MCF 10A (cell line): ENCODE measurements at regions of chr17 and their contacts with region 1.

Region 1: DNA sequence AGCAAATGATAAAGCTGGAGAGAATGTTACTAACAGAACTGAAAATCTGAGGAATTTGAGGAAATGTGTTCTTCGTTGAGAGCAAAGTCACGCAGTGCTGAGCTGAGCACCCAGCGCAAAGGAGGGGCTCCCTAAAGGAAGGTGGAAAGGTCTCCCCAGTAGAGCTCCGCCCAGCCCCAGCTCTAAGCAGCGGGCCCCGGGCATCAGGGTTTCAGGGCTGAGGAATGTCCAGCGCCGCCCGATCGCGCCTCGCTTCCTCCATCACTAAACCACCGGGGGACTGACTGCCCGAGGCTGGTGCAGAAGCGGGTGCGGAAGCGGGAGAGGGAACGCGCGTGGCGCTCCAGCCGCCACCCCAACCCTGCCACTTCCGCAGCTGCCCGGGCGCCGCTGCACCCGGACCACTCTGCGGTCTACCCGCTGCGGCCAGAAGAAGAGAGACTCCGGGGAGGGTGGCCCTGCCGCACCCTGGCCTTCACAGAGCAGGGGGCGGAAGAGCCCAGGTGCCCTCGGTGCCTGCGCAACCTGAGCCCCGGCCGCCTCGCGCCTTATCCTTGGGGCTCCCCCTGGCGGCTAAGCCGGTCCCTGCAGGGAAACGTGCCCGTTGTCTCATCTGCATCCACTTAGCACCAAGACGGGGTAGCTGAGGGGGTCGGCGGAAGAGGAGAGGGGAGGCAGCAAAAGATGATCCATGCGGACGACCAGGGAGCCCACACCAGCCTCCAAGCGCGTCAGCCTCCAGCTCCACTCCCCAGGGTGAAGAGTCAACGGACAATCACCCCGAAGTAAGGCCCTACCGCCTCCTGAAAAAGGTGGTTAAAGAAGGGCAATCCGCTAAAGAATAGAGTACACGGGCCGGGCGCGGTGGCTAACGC is 12.4 kb upstream of the GUCY2D start:
- DNase-seq: peak; percentile 80
- H3K4me3 Mint-ChIP-seq: peak overlapping the region; percentile 63
- H3K27ac Mint-ChIP-seq: no peak overlapping the region
- H3K4me1 Mint-ChIP-seq: peaks cover 13% of the 10 kb centered on the region
- H3K27me3 Mint-ChIP-seq: no peaks in the 10 kb centered on the region
- CTCF ChIP-seq: peak; percentile 91

Region 2: GRCh38 chr17:7818746-7819645 is 171.0 kb before region 1 on chr17:
- CTCF ChIA-PET with region 1: interaction called, 11 read pairs
- POLR2A ChIA-PET with region 1: interaction called, 3 read pairs
- intact Hi-C with region 1: loop called (anchors 2 kb)
- DNase-seq: no peak
- H3K4me3 Mint-ChIP-seq: no peak overlapping the region
- H3K27ac Mint-ChIP-seq: no peak overlapping the region
- H3K4me1 Mint-ChIP-seq: peaks cover 5% of the 10 kb centered on the region
- H3K27me3 Mint-ChIP-seq: no peaks in the 10 kb centered on the region
- CTCF ChIP-seq: no peak

Region 3: DNA sequence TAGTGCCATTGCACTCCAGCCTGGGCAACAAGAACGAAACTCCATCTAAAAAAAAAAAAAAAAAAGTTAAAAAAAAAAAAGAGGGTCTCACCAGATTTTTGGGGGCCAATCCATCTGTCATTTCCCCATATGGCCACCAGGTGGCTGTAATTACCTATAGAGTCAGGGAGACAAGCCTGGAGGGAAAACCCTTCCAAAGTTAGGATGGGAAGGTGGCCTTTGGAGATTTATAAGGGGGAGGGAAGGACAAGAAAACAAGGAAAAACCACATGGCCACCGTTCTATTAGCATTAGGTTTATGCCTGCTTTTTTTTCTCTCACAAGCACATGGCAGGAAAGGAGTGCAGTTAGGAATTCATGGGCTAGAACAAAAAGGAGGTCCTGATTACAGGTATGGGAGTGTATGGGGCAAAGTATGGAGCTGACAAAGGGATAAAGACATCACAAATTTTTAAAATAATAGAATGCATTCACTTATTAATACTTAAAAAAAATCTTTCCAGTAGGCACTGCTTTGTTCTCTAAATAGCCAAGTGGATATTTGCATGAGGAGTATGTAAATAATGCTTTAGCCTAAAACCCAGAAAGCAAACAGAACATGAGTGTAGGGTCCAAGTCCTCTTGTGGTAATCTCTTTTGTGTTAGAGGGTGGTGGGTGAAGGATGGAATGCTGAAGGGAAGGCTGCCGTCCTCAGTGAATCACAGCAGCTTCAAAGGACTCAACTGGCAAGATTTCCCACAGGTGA is 127.2 kb before region 1 on chr17:
- CTCF ChIA-PET with region 1: interaction called, 70 read pairs
- POLR2A ChIA-PET with region 1: interaction called, 19 read pairs
- intact Hi-C with region 1: loop called (anchors 1 kb)
- DNase-seq: peak; percentile 62
- H3K4me3 Mint-ChIP-seq: no peak overlapping the region
- H3K27ac Mint-ChIP-seq: no peak overlapping the region
- H3K4me1 Mint-ChIP-seq: peaks cover 11% of the 10 kb centered on the region
- H3K27me3 Mint-ChIP-seq: no peaks in the 10 kb centered on the region
- CTCF ChIP-seq: peak; percentile 75

Region 4: DNA sequence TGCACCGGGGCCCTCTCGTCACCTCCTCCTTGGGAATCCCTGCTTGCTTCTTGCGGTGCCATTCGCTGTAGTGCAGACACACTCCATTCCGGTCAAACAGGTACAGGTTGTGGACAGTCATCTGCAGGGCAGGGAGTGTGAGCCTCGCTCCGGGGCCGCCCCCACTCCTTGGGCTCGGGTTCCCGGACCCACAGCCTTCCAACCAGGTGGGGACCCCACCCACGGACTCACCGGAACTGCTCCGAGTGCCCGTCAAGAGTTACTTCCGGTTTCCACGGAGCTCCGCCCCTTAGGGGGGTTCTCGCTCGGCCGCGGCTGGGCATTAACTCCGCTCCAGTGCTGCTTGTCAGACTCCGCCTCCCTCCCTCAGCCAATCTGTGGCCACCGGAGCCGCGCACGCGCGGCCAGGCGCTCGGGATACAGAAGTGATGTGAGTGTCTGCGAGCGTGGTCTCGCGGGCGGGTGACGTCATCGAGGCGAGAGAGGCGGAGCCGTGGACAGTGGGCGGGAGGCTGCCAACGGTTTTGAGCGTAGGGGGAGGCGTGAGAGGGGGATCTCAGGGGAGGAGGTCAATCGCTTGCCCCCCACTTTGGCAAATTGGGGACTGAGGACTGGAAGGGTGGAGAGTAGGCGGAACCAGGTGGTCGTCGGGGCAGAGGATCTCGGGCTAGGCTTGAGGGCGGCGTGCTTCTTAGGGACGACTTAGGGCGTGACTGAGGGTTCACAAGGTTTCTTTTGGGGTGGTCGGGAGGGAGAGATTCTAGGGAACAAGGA is 58.1 kb before region 1 on chr17 and contains the starts of genes CNTROB and TRAPPC1:
- CTCF ChIA-PET with region 1: interaction called, 19 read pairs
- POLR2A ChIA-PET with region 1: interaction called, 27 read pairs
- intact Hi-C with region 1: no loop called
- DNase-seq: peak; percentile 98
- H3K4me3 Mint-ChIP-seq: peak within 1 kb of the TSS; percentile 95
- H3K27ac Mint-ChIP-seq: peak within 1 kb of the TSS; percentile 96
- H3K4me1 Mint-ChIP-seq: peaks cover 22% of the 10 kb centered on the region
- H3K27me3 Mint-ChIP-seq: no peaks in the 10 kb centered on the region
- CTCF ChIP-seq: no peak
- total RNA-seq, gene CNTROB: 31.5 and 39.2 TPM in 2 replicates
- total RNA-seq, gene TRAPPC1: 80.0 and 104 TPM in 2 replicates

Region 5: DNA sequence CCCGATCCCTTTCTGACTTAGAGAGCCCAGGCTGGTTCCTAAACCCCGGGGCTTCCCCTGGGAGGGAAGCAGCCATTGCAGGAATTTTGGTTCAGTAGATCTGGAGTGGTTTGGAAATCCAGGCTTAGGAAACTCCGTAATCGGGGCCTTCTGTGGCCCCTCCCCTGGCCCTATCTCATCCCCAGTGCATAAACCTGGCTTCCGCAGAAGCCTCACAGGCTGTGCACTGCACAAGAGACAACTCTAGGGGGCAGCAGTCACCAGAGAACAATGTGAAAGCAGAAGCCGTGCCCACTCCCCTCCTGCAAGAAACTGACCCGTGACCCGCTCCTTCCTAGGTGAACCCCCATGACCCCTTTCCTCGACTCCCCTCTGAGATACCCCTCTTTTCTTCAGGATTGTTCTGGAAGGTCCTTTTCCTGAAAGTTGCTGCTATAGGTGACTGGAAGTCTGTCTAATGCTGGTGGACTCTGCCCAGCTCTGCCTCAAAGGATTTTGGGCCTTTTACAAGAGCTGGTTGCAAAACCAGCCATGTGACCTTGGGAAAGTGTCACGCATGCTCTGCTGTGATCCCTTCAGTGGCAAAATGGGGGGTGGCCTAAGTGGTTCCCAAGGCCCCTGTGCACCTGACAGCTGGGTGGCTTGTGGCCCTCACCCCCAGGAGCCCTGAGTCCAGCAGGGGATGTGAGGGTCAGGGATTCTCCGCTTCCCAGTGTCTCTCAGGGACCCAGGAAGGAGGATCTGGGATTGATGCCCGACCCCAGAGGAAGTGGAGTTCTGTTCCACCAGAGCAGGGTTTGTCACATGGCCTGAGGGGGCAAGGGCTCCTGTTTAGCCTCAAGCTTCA is 26.8 kb after region 1 on chr17:
- CTCF ChIA-PET with region 1: interaction called, 14 read pairs
- POLR2A ChIA-PET with region 1: interaction called, 5 read pairs
- intact Hi-C with region 1: no loop called
- DNase-seq: peak; percentile 87
- H3K4me3 Mint-ChIP-seq: peak overlapping the region; percentile 51
- H3K27ac Mint-ChIP-seq: peak overlapping the region; percentile 95
- H3K4me1 Mint-ChIP-seq: peaks cover 44% of the 10 kb centered on the region
- H3K27me3 Mint-ChIP-seq: no peaks in the 10 kb centered on the region
- CTCF ChIP-seq: peak; percentile 90

Region 6: DNA sequence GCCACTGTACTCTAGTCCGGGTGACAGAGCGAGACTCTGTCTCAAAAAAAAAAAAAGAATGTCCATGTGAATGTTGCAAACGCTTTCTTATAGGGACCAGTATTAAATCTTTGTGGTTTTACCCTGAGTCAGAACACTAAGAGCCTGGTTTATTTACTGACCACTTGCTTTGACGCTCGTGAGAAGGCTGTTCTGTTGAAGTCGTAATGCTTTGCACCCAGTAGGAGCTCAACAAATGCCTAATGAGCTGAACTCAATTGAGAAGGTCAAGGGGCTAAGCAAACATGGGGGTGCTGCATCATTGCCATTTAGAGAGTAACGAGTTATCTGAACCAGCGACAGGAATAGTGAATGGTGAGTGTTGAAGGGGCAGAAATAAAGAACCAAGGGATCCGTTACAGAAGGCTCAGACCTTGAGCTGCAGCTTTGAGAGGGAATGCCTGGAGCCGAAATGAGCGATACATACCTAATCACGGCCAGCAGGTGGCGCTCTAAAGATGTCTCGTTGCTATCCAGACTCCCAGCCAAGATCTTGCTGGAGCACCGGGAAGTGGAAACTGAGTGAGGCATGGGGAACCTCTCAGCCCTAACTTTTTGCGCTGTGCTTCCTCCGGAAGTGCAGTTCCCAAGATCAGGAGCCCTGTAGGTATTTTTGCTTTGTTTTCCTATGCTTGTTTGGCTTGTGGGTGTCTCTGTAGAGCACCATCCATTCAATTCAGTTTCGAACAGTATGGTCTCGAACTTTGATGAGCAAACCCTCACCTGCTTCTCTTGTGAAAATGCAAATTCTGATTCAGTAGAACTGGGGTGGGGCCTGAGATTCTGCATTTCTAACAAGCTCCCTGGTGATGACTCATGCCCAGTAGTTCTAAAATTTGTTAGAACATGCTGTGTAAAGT is 420.2 kb after region 1 on chr17:
- CTCF ChIA-PET with region 1: no interaction called
- POLR2A ChIA-PET with region 1: no interaction called
- intact Hi-C with region 1: no loop called
- DNase-seq: peak; percentile 93
- H3K4me3 Mint-ChIP-seq: peak overlapping the region; percentile 60
- H3K27ac Mint-ChIP-seq: no peak overlapping the region
- H3K4me1 Mint-ChIP-seq: peaks cover 14% of the 10 kb centered on the region
- H3K27me3 Mint-ChIP-seq: no peaks in the 10 kb centered on the region
- CTCF ChIP-seq: peak; percentile 76

Region 7: DNA sequence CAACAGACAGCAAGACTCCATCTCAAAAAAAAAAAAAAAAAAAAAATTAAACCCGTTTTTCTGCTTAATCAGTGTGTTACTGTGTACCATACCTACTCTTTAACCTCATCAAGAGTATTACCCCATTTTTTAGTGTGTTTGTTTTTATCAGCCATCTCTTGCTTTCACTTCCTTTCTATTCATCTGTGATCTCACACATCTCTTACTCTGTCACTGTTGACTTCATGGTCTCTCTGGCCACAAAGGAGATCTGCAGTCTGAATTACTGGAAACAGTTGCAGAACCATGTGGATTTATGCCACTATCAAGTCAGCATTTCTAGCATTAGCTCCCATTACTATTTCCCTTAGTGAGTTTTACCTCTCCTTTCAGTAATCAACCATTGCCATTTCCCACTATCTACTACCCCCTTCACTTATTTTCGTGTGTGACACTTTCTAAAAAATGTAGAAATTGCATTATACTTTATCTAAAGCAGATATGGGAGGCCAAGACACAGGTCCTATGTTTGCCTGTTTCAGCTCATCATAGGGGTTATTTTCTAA is 465.7 kb after region 1 on chr17:
- CTCF ChIA-PET with region 1: no interaction called
- POLR2A ChIA-PET with region 1: no interaction called
- intact Hi-C with region 1: no loop called
- DNase-seq: no peak
- H3K4me3 Mint-ChIP-seq: no peak overlapping the region
- H3K27ac Mint-ChIP-seq: no peak overlapping the region
- H3K4me1 Mint-ChIP-seq: no peaks in the 10 kb centered on the region
- H3K27me3 Mint-ChIP-seq: no peaks in the 10 kb centered on the region
- CTCF ChIP-seq: no peak